ENCODE measurements at regions of chr1 and their contacts with region 1.

Region 1: DNA sequence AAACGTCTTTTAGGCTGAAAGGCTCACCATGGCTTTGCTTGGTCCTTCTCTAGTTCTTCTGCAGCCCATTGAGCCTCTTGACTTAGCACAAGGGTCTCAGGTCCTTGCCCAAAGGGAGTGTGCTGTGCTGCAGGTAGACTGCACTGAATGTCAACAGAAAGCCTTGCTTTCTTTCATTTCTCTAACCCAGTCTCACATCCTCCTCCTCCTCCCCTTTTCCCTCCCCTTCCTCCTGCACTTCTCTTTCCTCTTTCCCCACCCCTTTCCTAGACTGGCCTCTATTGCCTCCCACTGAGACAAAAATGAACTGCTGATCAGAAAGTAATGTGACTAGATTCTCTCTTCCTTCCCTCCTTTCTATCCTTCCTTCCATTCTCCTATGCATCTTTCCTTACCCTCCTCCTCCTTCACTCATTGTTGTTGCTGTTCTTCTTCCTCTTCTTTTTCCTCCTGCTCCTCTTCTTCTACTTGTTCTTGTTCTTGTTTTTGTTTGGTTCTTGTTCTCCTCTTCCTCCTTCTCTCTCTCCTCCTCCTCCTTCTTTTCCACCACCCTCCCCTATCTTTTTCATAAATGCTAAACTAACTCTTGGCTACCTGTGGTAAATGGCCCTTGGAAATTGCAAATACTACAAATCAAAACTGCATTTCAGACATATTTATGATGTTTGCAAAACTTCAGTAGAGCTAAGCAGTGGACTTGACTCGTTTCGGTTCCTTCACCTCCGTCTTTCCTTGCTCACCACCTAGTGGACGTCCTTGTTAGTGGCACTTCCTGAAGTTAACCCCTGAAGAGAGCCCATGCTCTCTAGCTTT is at the start of gene SELL:
- DNase-seq: peak; percentile 48 to 78 (median 69)
- H3K4me3 ChIP-seq: peak within 1 kb of the TSS; percentile 71
- H3K4me3 Mint-ChIP-seq: peak within 1 kb of the TSS; percentile 83 to 93 (median 85)
- H3K27ac ChIP-seq: no peak within 1 kb of the TSS
- H3K27ac Mint-ChIP-seq: peak within 1 kb of the TSS; percentile 4 to 94 (median 74)
- H3K4me1 ChIP-seq: peaks cover 15% of the 10 kb centered on the region
- H3K4me1 Mint-ChIP-seq: peaks cover 23 to 36% (median 34%) of the 10 kb centered on the region in 3 donors
- H3K27me3 ChIP-seq: no peaks in the 10 kb centered on the region
- H3K27me3 Mint-ChIP-seq: peaks cover 2 to 5% of the 10 kb centered on the region in 2 donors
- total RNA-seq, gene SELL: 48.2 to 48.5 TPM

Region 2: GRCh38 chr1:169546087-169546995 is 165.3 kb before region 1 on chr1:
- CTCF ChIA-PET with region 1: interaction called, 26 read pairs
- POLR2A ChIA-PET with region 1: no interaction called
- DNase-seq: peak; percentile 12 to 68 (median 60)
- H3K4me3 ChIP-seq: no peak overlapping the region
- H3K4me3 Mint-ChIP-seq: no peak overlapping the region
- H3K27ac ChIP-seq: no peak overlapping the region
- H3K27ac Mint-ChIP-seq: peak overlapping the region in 1 of 8 donors; percentile 34
- H3K4me1 ChIP-seq: no peaks in the 10 kb centered on the region
- H3K4me1 Mint-ChIP-seq: no peaks in the 10 kb centered on the region
- H3K27me3 ChIP-seq: no peaks in the 10 kb centered on the region
- H3K27me3 Mint-ChIP-seq: peaks cover 2 to 12% of the 10 kb centered on the region in 2 donors

Region 3: GRCh38 chr1:169586395-169587255 is 125.0 kb before region 1 on chr1 and contains the start of gene F5:
- CTCF ChIA-PET with region 1: interaction called, 23 read pairs
- POLR2A ChIA-PET with region 1: interaction called, 3 read pairs
- DNase-seq: peak; percentile 50 to 78 (median 62)
- H3K4me3 ChIP-seq: no peak within 1 kb of the TSS
- H3K4me3 Mint-ChIP-seq: peak within 1 kb of the TSS; percentile 21 to 83 (median 67)
- H3K27ac ChIP-seq: no peak within 1 kb of the TSS
- H3K27ac Mint-ChIP-seq: peak within 1 kb of the TSS in 5 of 8 donors; percentile 43 to 87 (median 52)
- H3K4me1 ChIP-seq: peaks cover 19% of the 10 kb centered on the region
- H3K4me1 Mint-ChIP-seq: peaks cover 14 to 35% (median 26%) of the 10 kb centered on the region in 3 donors
- H3K27me3 ChIP-seq: peaks cover 5% of the 10 kb centered on the region
- H3K27me3 Mint-ChIP-seq: peaks cover 20 to 38% of the 10 kb centered on the region in 2 donors
- total RNA-seq, gene F5: 72.2 to 76.5 TPM

Region 4: DNA sequence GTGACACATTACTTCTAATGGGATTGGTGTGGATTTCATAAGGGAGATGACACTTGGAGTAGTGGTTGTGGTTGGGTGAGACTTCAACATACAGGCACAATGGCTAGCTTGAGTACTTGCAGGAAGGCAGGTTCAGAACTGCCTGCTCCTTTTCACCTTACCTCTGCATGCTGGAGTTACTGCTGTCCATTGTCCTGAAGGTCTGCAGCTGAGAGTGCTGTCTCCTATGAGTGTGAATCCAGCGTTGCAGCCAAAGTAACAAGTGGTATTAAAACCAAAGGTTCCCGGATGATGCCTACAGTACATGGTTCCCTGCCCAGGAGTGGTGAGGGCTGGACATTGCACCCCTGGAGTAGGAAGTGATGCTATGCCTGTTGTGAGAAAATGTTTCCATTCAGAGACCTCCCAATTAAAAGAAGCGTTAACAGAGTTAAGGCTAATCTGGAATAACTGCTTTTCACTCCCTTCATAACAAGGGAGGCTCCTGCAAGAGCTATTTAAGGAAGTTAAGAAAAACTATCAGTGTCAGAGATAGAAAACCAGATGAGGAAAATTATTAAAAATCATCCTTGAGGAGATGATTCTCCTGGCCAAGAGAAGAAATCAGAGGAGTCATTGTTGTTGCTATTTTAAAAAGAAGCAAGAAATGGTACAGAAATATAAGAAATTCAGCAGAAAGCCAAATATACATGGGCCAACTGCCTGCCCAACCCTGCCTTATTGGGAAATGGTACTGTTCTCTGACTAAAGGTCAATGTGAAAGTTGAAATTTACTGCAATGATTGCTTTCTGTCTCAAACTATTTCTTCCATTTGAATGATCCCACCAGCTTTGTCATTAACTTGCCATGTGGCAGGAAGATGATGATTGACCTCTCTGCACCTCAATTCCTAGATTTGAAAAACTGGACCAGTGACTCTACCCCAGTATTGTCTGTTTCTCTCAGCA is 115.6 kb before region 1 on chr1:
- CTCF ChIA-PET with region 1: interaction called, 59 read pairs
- POLR2A ChIA-PET with region 1: interaction called, 8 read pairs
- DNase-seq: no peak
- H3K4me3 ChIP-seq: no peak overlapping the region
- H3K4me3 Mint-ChIP-seq: peak overlapping the region in 1 of 7 donors; percentile 27
- H3K27ac ChIP-seq: no peak overlapping the region
- H3K27ac Mint-ChIP-seq: no peak overlapping the region
- H3K4me1 ChIP-seq: peaks cover under 1% of the 10 kb centered on the region
- H3K4me1 Mint-ChIP-seq: peaks cover 4 to 10% (median 5%) of the 10 kb centered on the region in 3 donors
- H3K27me3 ChIP-seq: no peaks in the 10 kb centered on the region
- H3K27me3 Mint-ChIP-seq: peaks cover 4 to 11% of the 10 kb centered on the region in 2 donors

Region 5: GRCh38 chr1:169601093-169601881 is 110.4 kb before region 1 on chr1:
- CTCF ChIA-PET with region 1: interaction called, 59 read pairs
- POLR2A ChIA-PET with region 1: interaction called, 8 read pairs
- DNase-seq: peak in 2 of 5 donors; percentile 19 to 39
- H3K4me3 ChIP-seq: no peak overlapping the region
- H3K4me3 Mint-ChIP-seq: peak overlapping the region in 1 of 7 donors; percentile 16
- H3K27ac ChIP-seq: no peak overlapping the region
- H3K27ac Mint-ChIP-seq: peak overlapping the region; percentile 0 to 43 (median 29)
- H3K4me1 ChIP-seq: peaks cover 50% of the 10 kb centered on the region
- H3K4me1 Mint-ChIP-seq: peaks cover 49 to 54% (median 51%) of the 10 kb centered on the region in 3 donors
- H3K27me3 ChIP-seq: no peaks in the 10 kb centered on the region
- H3K27me3 Mint-ChIP-seq: peaks cover 2 to 7% of the 10 kb centered on the region in 2 donors

Region 6: GRCh38 chr1:169694304-169695075 is 17.2 kb before region 1 on chr1:
- CTCF ChIA-PET with region 1: interaction called, 20 read pairs
- POLR2A ChIA-PET with region 1: interaction called, 9 read pairs
- DNase-seq: peak in 4 of 5 donors; percentile 16 to 78 (median 70)
- H3K4me3 ChIP-seq: peak overlapping the region; percentile 33
- H3K4me3 Mint-ChIP-seq: peak overlapping the region; percentile 53 to 76 (median 69)
- H3K27ac ChIP-seq: no peak overlapping the region
- H3K27ac Mint-ChIP-seq: peak overlapping the region; percentile 69 to 98 (median 86)
- H3K4me1 ChIP-seq: peaks cover 99% of the 10 kb centered on the region
- H3K4me1 Mint-ChIP-seq: peaks cover 72 to 92% (median 73%) of the 10 kb centered on the region in 3 donors
- H3K27me3 ChIP-seq: no peaks in the 10 kb centered on the region
- H3K27me3 Mint-ChIP-seq: no peaks in the 10 kb centered on the region

Region 7: GRCh38 chr1:169701261-169702005 is 10.2 kb before region 1 on chr1:
- CTCF ChIA-PET with region 1: interaction called, 15 read pairs
- POLR2A ChIA-PET with region 1: interaction called, 4 read pairs
- DNase-seq: peak in 2 of 5 donors; percentile 34 to 77
- H3K4me3 ChIP-seq: peak overlapping the region; percentile 17
- H3K4me3 Mint-ChIP-seq: peak overlapping the region; percentile 20 to 74 (median 69)
- H3K27ac ChIP-seq: no peak overlapping the region
- H3K27ac Mint-ChIP-seq: peak overlapping the region; percentile 26 to 92 (median 76)
- H3K4me1 ChIP-seq: peaks cover 100% of the 10 kb centered on the region
- H3K4me1 Mint-ChIP-seq: peaks cover 92 to 98% (median 96%) of the 10 kb centered on the region in 3 donors
- H3K27me3 ChIP-seq: no peaks in the 10 kb centered on the region
- H3K27me3 Mint-ChIP-seq: peaks cover 0 to 7% of the 10 kb centered on the region in 2 donors

Region 8: GRCh38 chr1:169762699-169763098 is 51.0 kb after region 1 on chr1:
- CTCF ChIA-PET with region 1: no interaction called
- POLR2A ChIA-PET with region 1: no interaction called
- DNase-seq: no peak
- H3K4me3 ChIP-seq: no peak overlapping the region
- H3K4me3 Mint-ChIP-seq: no peak overlapping the region
- H3K27ac ChIP-seq: no peak overlapping the region
- H3K27ac Mint-ChIP-seq: no peak overlapping the region
- H3K4me1 ChIP-seq: no peaks in the 10 kb centered on the region
- H3K4me1 Mint-ChIP-seq: no peaks in the 10 kb centered on the region
- H3K27me3 ChIP-seq: no peaks in the 10 kb centered on the region
- H3K27me3 Mint-ChIP-seq: peaks cover 5 to 12% of the 10 kb centered on the region in 2 donors

Measured in CD8-positive, alpha-beta memory T cell (primary cell).